IMR-90 (cell line): ENCODE measurements at regions of chr12 and their contacts with region 1.

Region 1: DNA sequence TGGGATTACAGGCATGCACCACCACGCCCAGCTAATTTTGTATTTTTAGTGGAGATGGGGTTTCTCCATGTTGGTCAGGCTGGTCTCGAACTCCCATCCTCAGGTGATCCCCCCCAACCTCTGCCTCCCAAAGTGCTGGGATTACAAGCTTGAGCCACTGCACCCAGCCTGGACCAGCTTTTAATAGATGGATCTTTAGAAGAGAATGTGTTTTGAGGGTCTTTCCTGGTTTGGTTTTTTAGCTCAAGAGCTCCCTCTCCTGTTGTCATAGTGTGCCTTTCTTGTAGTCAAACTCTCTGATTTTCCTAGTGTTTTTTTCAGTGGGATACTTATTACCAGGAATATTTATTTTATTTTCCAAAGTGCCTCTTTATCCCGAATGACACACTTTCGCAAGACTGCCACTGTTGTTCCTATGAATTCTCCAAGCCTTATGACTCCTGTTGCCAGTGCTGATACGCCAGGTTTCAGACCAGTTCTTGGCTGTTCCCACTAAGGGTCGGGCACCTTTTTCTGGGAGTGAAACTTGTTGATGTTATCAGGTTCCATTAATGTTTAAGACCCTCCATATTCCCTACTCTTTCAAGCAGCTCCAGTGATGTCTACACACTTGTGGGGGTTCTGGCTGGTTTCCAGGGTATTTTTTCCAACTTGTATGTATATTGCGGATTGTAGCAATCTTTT is 31.5 kb upstream of the LIMA1 start:
- DNase-seq: peak; percentile 80
- ATAC-seq: peak; percentile 70
- H3K4me3 ChIP-seq: no peak overlapping the region
- H3K27ac ChIP-seq: no peak overlapping the region
- H3K4me1 ChIP-seq: peaks cover 6% of the 10 kb centered on the region
- H3K27me3 ChIP-seq: no peaks in the 10 kb centered on the region
- CTCF ChIP-seq: peak; percentile 85
- POLR2A ChIP-seq: no peak
- RAD21 ChIP-seq: peak; percentile 90

Region 2: DNA sequence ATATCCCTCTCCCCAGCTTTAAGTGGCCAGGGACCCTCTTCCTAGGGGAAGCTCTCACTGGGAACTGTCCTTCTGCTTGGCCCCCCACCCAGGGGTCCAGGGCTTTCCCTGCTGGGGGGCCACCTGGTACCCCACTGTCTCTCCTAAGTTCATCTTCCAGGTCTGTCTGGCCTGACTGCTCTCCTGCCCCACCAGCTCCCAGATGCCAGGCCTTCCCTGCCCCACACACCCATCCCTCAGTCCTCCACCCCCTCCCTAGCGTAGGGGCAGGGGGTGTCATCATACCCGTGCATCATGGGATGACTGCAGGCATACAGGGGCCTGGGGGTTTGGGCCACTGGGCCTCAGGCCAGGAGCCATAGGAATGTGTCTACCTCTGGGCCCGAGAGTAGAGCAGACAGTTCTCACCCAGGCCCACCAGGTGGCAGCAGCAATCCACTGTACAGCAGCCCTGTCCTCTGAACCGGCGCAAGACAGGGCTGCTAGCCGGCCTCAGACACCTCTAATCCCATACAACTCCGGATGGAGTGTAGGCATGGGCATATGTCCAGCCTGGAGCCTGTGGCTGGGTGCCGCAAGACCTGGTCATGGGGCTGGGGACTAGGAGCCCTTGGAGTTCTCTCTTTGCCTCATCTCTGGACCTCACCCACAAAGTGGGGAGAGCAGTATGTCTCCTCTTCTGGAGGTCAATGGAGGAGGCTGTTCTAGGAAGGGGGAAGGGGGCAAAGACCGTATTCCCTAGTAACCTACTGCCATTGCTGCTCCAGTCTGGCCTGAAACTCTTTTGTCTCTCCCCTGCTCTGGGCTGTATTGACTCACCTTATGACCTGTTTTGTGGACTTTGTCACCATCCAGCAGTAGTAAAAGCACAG is 239.6 kb before region 1 on chr12:
- CTCF ChIA-PET with region 1: no interaction called
- POLR2A ChIA-PET with region 1: no interaction called
- dilution Hi-C with region 1: no loop called
- in situ Hi-C with region 1: no loop called
- intact Hi-C with region 1: loop called (anchors 2 kb)
- DNase-seq: peak; percentile 76
- ATAC-seq: peak; percentile 98
- H3K4me3 ChIP-seq: no peak overlapping the region
- H3K27ac ChIP-seq: no peak overlapping the region
- H3K4me1 ChIP-seq: peaks cover 3% of the 10 kb centered on the region; the same call in 1 of the 2 replicates
- H3K27me3 ChIP-seq: no peaks in the 10 kb centered on the region
- CTCF ChIP-seq: peak; percentile 94
- POLR2A ChIP-seq: no peak
- RAD21 ChIP-seq: peak; percentile 95

Region 3: DNA sequence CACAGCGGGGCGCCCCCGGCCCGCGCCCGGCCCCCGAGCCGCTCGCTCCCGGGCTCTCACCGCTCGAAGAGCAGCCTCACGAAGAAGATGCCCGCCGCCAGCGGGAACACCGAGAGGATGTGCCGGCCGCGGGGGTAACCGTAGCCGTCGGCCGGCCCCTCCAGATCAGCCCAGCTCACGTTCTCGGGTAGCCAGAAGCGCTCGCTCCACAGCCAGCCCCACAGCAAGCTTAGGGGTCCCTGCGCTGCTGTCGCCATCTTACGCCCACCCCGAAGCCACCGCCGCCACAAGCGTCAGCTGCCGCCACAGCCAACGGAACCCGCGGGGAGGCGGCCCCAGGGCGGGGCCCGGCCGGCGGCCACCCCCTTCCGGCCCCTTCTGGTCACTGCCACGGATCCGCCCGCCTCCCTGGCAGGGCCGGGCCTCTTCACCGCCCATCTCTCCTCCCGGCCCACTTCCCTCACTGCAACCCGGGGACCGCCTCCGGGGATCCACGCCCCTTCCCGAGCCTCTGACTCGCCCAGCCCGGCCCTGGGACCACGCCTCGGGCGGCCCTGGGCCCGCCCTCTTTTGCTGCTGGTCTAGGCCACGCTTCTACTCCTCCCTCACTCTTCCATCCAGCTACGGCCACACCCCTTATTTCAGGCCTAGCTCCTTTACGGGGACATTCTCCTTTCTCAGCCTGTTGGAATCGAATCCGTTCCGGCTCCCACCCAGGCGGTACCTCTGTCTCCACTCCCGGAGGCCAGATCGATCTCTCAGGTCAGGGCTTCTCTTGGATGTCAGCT is 147.5 kb before region 1 on chr12 and contains the start of gene CERS5:
- CTCF ChIA-PET with region 1: no interaction called
- POLR2A ChIA-PET with region 1: interaction called, 12 read pairs
- dilution Hi-C with region 1: no loop called
- in situ Hi-C with region 1: no loop called
- intact Hi-C with region 1: no loop called
- DNase-seq: peak; percentile 97
- ATAC-seq: peak; percentile 98
- H3K4me3 ChIP-seq: peak within 1 kb of the TSS; percentile 75
- H3K27ac ChIP-seq: peak within 1 kb of the TSS; percentile 90
- H3K4me1 ChIP-seq: peaks cover 5% of the 10 kb centered on the region; the same call in 1 of the 2 replicates
- H3K27me3 ChIP-seq: no peaks in the 10 kb centered on the region
- CTCF ChIP-seq: no peak; the same call in 1 of the 2 replicates
- POLR2A ChIP-seq: peak; percentile 93
- RAD21 ChIP-seq: no peak
- total RNA-seq, gene CERS5: 40.3 and 47.5 TPM in 2 replicates

Region 4: DNA sequence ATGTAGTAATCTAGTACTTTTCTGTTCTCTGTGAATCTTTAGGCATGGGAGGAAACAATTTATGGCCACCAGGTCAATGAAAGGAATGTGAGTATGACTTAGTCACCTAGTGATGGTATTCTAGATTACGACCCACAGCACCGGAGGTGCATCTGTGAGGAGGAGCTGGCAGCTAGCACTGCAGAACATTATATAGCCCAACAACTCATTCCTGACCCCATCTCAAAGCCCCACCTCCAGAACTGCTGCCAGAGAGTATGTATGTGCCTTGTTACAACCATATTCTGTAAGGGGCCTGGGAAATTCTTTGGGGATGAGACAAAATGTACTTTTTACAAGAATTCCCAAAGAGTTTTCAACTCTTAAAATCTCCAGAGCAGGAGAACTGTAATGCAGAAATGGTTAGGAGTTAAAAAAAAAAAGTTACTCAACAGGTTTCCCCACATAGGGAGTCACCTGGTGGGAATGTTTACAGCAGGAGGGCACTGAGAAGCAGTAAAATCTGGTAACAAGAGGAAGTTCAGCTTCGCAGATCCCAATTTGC is 112.7 kb before region 1 on chr12:
- CTCF ChIA-PET with region 1: no interaction called
- POLR2A ChIA-PET with region 1: no interaction called
- dilution Hi-C with region 1: no loop called
- in situ Hi-C with region 1: loop called (anchors 10 kb)
- intact Hi-C with region 1: no loop called
- DNase-seq: peak; percentile 96
- ATAC-seq: peak; percentile 68
- H3K4me3 ChIP-seq: no peak overlapping the region
- H3K27ac ChIP-seq: peak overlapping the region; percentile 33; the same call in 1 of the 2 replicates
- H3K4me1 ChIP-seq: peaks cover 16% of the 10 kb centered on the region
- H3K27me3 ChIP-seq: no peaks in the 10 kb centered on the region
- CTCF ChIP-seq: no peak
- POLR2A ChIP-seq: 0 out of 2 replicates have a peak, but pooled peaks have one; percentile 42
- RAD21 ChIP-seq: no peak

Region 5: DNA sequence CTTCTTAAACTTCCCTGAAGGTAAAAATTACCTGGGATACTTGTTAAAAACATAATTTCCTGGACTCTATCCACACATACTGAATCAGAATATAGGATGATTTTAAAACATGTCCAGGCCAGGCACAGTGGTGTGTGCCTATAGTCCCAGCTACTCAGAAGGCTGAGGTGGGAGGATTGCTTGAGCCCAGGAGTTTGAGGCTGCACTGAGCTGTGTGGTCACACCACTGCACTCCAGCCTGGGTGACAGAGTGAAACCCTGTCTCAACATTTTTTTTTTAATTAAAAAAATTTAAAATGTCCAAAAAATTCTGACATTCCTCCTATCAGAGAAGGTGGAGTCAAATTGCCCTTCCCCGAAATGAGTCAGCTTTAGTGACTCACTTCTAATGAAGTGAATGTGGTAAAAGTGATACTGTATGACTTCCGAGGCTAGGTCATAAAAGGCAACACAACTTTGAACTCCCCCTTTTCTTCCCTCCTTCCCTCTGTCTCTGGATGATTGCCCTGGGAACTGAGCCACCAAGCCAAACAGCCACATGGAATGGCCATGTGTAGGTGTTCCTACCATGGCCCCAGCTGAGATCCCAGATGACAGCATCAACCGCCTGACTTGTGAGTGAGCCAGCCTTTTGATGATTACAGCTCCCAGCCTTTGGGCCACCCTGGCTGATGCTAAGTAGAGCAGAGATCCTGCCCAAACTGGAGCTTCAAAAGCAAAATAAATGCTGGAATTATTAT is 67.7 kb before region 1 on chr12:
- CTCF ChIA-PET with region 1: no interaction called
- POLR2A ChIA-PET with region 1: no interaction called
- dilution Hi-C with region 1: no loop called
- in situ Hi-C with region 1: no loop called
- intact Hi-C with region 1: loop called (anchors 5 kb)
- DNase-seq: peak; percentile 99
- ATAC-seq: peak; percentile 74
- H3K4me3 ChIP-seq: no peak overlapping the region
- H3K27ac ChIP-seq: peak overlapping the region; percentile 83
- H3K4me1 ChIP-seq: peaks cover 21% of the 10 kb centered on the region
- H3K27me3 ChIP-seq: no peaks in the 10 kb centered on the region
- CTCF ChIP-seq: no peak
- POLR2A ChIP-seq: no peak
- RAD21 ChIP-seq: no peak

Region 6: DNA sequence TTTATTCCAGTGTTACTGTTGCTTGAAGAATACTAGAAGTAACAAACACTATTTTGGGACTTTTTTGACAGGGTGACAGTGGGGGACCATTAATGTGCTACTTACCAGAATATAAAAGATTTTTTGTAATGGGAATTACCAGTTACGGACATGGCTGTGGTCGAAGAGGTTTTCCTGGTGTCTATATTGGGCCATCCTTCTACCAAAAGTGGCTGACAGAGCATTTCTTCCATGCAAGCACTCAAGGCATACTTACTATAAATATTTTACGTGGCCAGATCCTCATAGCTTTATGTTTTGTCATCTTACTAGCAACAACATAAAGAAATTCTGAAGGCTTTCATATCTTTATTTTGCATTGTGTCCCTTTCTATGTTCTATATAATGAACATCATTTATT is 572.4 kb after region 1 on chr12:
- CTCF ChIA-PET with region 1: no interaction called
- POLR2A ChIA-PET with region 1: no interaction called
- dilution Hi-C with region 1: no loop called
- in situ Hi-C with region 1: no loop called
- intact Hi-C with region 1: no loop called
- DNase-seq: peak; percentile 18
- ATAC-seq: no peak
- H3K4me3 ChIP-seq: no peak overlapping the region
- H3K27ac ChIP-seq: no peak overlapping the region
- H3K4me1 ChIP-seq: no peaks in the 10 kb centered on the region
- H3K27me3 ChIP-seq: no peaks in the 10 kb centered on the region
- CTCF ChIP-seq: no peak
- POLR2A ChIP-seq: no peak
- RAD21 ChIP-seq: no peak